PC-9 (cell line): ENCODE measurements at regions of chr17 and their contacts with region 1.

Region 1: GRCh38 chr17:18260332-18261144 is at the start of gene MIEF2:
- DNase-seq: peak; percentile 93 to 98
- H3K4me3 ChIP-seq: peak within 1 kb of the TSS; percentile 84
- H3K27ac ChIP-seq: peak within 1 kb of the TSS; percentile 96
- H3K4me1 ChIP-seq: peaks cover 39% of the 10 kb centered on the region
- H3K27me3 ChIP-seq: no peaks in the 10 kb centered on the region
- CTCF ChIP-seq: no peak
- total RNA-seq, gene MIEF2: 29.6 and 33.0 TPM in 2 replicates

Region 2: DNA sequence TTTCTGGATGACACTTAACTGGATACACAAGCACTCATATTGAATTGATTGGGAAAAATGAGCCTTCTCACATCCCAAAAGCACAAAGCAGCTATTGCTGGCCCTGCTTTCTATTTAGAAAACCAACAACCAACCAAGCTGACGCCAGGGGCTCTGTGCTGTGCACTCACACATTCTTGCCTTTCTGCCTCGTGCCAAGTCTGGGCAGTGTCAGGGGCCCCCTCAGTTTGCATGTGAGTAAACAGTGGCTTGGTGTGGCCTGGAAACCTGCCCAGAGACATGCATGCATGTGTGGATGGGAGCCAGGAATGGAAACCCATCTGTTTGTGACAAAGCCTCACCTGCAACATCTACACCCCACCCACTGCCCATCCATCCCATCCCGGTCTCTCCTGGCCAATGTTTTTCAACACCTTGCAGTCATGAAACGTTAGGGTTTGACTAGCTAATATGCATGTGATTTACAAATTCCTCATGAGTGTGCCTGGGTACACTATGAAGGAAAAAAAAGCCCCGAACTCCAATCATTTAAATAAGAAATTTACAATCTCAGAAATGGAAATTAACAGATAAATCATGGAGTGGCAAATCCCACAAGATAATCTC is 20.3 kb after region 1 on chr17:
- CTCF ChIA-PET with region 1: interaction called, 3 read pairs
- POLR2A ChIA-PET with region 1: interaction called, 14 read pairs
- intact Hi-C with region 1: no loop called
- DNase-seq: no peak
- H3K4me3 ChIP-seq: no peak overlapping the region
- H3K27ac ChIP-seq: no peak overlapping the region
- H3K4me1 ChIP-seq: no peaks in the 10 kb centered on the region
- H3K27me3 ChIP-seq: no peaks in the 10 kb centered on the region
- CTCF ChIP-seq: no peak

Region 3: DNA sequence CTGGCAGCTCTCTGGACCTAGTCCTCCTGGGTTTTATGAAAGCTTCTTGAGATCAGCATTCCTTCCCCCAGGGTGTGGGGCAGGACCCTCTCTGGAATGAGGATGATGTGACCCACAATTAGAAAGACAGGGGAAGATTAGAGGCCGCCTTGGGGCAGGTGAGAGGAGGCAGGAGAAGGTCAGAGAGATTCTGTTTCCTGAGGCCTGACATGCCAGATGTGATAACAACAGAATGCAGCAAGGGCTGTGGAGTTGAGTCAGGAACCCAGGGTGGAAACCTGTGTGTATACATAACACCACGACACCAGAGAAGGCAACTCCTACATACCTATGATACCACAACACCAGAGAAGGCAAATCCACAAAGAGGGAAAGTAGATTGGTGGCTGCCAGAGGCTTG is 686.0 kb after region 1 on chr17:
- CTCF ChIA-PET with region 1: no interaction called
- POLR2A ChIA-PET with region 1: interaction called, 11 read pairs
- intact Hi-C with region 1: no loop called
- DNase-seq: peak; percentile 76 to 83
- H3K4me3 ChIP-seq: no peak overlapping the region
- H3K27ac ChIP-seq: no peak overlapping the region
- H3K4me1 ChIP-seq: peaks cover 14% of the 10 kb centered on the region; the same call in 1 of the 2 replicates
- H3K27me3 ChIP-seq: peaks cover 12% of the 10 kb centered on the region; the same call in 1 of the 2 replicates
- CTCF ChIP-seq: no peak